ENCODE measurements at regions of chr6 and their contacts with region 1.

Region 1: DNA sequence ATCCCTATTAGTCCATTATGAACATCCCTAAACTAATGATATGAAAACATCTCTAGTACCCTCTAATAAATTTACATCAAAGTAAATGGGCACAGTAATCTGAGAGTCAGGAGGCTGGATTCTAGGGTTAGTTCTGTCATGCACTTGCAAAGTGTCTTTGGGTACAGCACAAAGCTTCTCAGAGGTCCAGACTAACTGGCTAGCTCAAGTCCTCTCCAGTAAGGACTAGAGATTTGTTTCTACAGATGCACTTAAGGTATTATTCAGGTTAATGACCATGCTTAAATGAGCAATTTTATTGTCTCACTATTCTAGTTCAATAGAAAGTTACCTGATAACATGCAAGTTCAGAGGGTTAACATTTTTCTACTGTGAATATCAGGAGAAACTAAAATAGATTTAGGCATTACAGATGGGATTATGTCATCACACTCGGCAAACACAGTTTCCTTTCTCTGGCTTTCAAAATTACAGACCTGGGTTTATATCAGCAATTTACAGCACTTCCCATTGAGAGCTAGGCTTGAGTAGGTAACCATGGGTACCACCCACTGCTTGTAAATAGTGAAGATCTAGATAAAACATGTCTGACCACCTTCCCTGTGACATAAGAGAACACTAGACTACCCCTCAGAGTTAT is 402.9 kb upstream of the RUNX2 start:
- DNase-seq: peak in 26 of 35 experiments; percentile 6 to 87 (median 36)
- ATAC-seq: peak; percentile 64 to 96 (median 76)
- H3K4me3 ChIP-seq: peak overlapping the region in 1 of 2 donors; percentile 17
- H3K4me3 Mint-ChIP-seq: peak overlapping the region in 2 of 3 donors; percentile 12 to 22
- H3K27ac ChIP-seq: peak overlapping the region; percentile 90
- H3K27ac Mint-ChIP-seq: peak overlapping the region; percentile 26 to 75
- H3K4me1 ChIP-seq: peaks cover 7 to 20% of the 10 kb centered on the region in 2 experiments
- H3K4me1 Mint-ChIP-seq: peaks cover 46 to 55% (median 49%) of the 10 kb centered on the region in 3 donors
- H3K27me3 ChIP-seq: no peaks in the 10 kb centered on the region
- H3K27me3 Mint-ChIP-seq: no peaks in the 10 kb centered on the region

Region 2: DNA sequence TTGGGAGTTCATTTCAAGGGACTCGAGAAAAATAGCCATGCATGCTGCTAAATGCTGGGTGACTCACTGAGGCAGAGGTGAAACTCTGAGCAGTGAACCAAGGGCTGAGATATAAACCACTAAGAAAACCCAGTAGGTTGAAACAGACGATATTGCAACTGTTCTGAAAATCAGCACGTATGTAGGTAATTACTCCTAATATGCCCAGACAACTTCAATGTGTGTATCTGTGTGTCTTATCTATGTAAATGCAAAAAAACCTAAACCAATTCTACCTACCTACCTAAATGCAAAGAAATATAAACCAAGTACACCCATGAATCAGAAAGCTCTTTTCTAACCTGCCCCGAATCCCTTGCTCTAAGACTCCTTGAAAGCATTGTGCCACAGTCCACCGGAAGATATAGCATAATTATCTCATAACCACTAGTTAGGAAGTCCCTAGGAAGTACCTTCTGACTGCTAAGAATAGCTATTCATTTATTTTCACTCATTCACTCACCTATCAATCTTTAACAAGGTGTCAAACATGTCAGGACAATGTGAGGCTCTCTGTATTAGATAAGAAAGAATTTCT is 55.8 kb before region 1 on chr6:
- CTCF ChIA-PET with region 1: interaction called in 1 of 2 experiments, 10 read pairs
- POLR2A ChIA-PET with region 1: no interaction called
- DNase-seq: no peak
- ATAC-seq: no peak
- H3K4me3 ChIP-seq: no peak overlapping the region
- H3K4me3 Mint-ChIP-seq: no peak overlapping the region
- H3K27ac ChIP-seq: no peak overlapping the region
- H3K27ac Mint-ChIP-seq: no peak overlapping the region
- H3K4me1 ChIP-seq: no peaks in the 10 kb centered on the region
- H3K4me1 Mint-ChIP-seq: peaks cover 12 to 15% (median 14%) of the 10 kb centered on the region in 3 donors
- H3K27me3 ChIP-seq: no peaks in the 10 kb centered on the region
- H3K27me3 Mint-ChIP-seq: no peaks in the 10 kb centered on the region

Measured in T-cell (primary cell).